Esophagus squamous epithelium (tissue), 5 donors: ENCODE measurements at regions of chr1 and their contacts with region 1.

Region 1: DNA sequence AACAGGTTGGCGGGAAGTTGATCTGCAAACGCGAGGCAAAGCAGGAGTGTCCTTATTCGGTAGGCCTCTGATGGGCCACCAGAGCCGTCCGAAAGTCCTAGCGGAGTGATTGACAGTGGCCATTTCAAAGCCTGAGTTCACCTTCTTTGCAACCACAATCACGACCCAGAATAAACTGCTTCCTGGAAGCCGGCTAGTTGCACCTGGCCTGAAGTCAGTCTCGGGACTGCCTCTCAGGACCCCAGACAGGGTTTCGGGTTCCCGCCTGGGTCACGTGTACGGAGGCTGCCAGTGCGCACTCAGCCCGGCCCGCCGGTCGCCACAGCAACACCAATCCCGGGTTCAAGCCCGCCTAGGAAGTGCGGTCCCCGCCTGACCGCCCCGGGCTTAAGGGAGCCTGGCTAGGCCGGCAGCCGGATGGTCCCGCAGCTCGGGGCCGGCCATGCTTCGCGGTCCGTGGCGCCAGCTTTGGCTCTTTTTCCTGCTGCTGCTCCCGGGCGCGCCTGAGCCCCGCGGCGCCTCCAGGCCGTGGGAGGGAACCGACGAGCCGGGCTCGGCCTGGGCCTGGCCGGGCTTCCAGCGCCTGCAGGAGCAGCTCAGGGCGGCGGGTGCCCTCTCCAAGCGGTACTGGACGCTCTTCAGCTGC is at the start of gene TOR3A:
- DNase-seq: peak; percentile 60
- H3K4me3 ChIP-seq: peak within 1 kb of the TSS; percentile 79 to 94 (median 84)
- H3K27ac ChIP-seq: peak within 1 kb of the TSS; percentile 88 to 92 (median 88)
- H3K4me1 ChIP-seq: peaks cover 3 to 45% (median 8%) of the 10 kb centered on the region in 3 donors
- H3K27me3 ChIP-seq: no peaks in the 10 kb centered on the region
- CTCF ChIP-seq: no peak
- POLR2A ChIP-seq: peak in 2 of 4 donors; percentile 67 to 90
- total RNA-seq, gene TOR3A: 31.9 to 48.8 (median 34.4) TPM

Region 2: DNA sequence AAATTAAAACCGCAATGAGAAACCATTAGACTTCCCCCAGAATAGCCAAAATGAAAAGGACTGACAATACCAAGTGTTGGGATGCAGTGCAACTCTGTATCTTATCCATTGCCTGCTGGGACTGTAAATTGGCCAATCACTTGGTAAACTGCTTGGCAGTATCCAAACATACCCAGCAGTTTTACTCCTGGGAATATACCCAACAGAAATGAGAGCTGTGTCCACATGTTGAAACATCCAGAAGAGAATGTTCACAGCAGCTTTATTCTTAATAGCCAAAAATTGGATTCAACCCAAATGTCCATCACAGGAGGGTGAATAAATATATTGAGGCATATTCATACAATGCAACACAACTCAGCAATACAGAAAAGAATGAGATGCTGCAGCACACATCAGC is 69.8 kb before region 1 on chr1:
- intact Hi-C with region 1: no loop called
- DNase-seq: no peak
- H3K4me3 ChIP-seq: no peak overlapping the region
- H3K27ac ChIP-seq: no peak overlapping the region
- H3K4me1 ChIP-seq: peaks cover 4 to 20% (median 8%) of the 10 kb centered on the region in 3 donors
- H3K27me3 ChIP-seq: no peaks in the 10 kb centered on the region
- CTCF ChIP-seq: no peak
- POLR2A ChIP-seq: no peak

Region 3: GRCh38 chr1:179025125-179025974 is 56.5 kb before region 1 on chr1 and contains the start of gene FAM20B:
- intact Hi-C with region 1: no loop called
- DNase-seq: peak; percentile 68
- H3K4me3 ChIP-seq: peak within 1 kb of the TSS; percentile 72 to 99 (median 88)
- H3K27ac ChIP-seq: peak within 1 kb of the TSS; percentile 91 to 98 (median 96)
- H3K4me1 ChIP-seq: peaks cover 0 to 47% (median 14%) of the 10 kb centered on the region in 3 donors
- H3K27me3 ChIP-seq: no peaks in the 10 kb centered on the region
- CTCF ChIP-seq: peak in 2 of 6 experiments; percentile 17 to 25
- POLR2A ChIP-seq: no peak
- total RNA-seq, gene FAM20B: 16.3 to 27.3 (median 18.7) TPM

Region 4: GRCh38 chr1:179121159-179121938 is 39.5 kb after region 1 on chr1:
- intact Hi-C with region 1: no loop called
- DNase-seq: no peak
- H3K4me3 ChIP-seq: no peak overlapping the region
- H3K27ac ChIP-seq: no peak overlapping the region
- H3K4me1 ChIP-seq: peaks cover 0 to 21% (median 0%) of the 10 kb centered on the region in 3 donors
- H3K27me3 ChIP-seq: no peaks in the 10 kb centered on the region
- CTCF ChIP-seq: peak; percentile 31 to 56 (median 46)
- POLR2A ChIP-seq: no peak

Region 5: GRCh38 chr1:179365320-179366092 is 283.7 kb after region 1 on chr1 and contains the start of gene AXDND1:
- intact Hi-C with region 1: loop called (anchors 5 kb)
- DNase-seq: peak; percentile 80
- H3K4me3 ChIP-seq: peak within 1 kb of the TSS; percentile 38 to 82 (median 60)
- H3K27ac ChIP-seq: peak within 1 kb of the TSS; percentile 76 to 95 (median 90)
- H3K4me1 ChIP-seq: peaks cover 0 to 13% (median 7%) of the 10 kb centered on the region in 3 donors
- H3K27me3 ChIP-seq: no peaks in the 10 kb centered on the region
- CTCF ChIP-seq: peak in 2 of 6 experiments; percentile 7 to 18
- POLR2A ChIP-seq: peak in 2 of 4 donors; percentile 38 to 51
- total RNA-seq, gene AXDND1: 0.19 TPM in 1 of 4 donors, not detected in the others